Sigmoid colon (tissue), 7 donors: ENCODE measurements at regions of chr1 and their contacts with region 1.

Region 1: DNA sequence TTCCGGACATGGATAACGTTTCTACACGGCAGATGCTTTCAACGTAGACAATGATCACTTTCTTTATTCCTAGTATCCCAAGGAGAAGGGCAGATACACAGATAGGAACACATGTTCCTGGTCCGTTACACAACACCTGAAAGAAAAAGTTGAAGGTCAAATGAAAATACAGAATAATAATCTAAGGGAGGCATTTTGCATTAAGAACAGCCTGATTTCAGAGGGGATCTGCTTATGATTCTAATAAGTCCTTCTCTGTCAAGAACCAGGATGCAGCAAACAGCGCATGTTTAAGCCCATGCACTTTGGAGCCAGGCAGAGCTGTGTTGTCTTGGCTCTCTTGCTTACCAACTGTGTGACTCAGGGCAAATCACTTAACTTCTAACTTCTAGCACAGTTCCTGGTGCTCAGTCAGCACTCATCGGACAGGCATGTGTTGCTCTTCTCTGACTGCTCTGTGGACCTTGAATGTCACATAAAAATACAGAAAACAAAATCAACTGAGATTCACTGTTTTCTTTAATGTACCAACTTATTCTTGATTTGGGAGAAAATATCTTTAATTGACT is 56.3 kb upstream of the CNN3 start:
- DNase-seq: peak; percentile 66
- H3K4me3 ChIP-seq: no peak overlapping the region
- H3K27ac ChIP-seq: peak overlapping the region in 3 of 4 donors; percentile 14 to 58 (median 44)
- H3K4me1 ChIP-seq: peaks cover 0 to 16% (median 5%) of the 10 kb centered on the region in 4 donors
- H3K27me3 ChIP-seq: no peaks in the 10 kb centered on the region
- CTCF ChIP-seq: no peak
- EP300 ChIP-seq: no peak
- POLR2A ChIP-seq: no peak

Region 2: DNA sequence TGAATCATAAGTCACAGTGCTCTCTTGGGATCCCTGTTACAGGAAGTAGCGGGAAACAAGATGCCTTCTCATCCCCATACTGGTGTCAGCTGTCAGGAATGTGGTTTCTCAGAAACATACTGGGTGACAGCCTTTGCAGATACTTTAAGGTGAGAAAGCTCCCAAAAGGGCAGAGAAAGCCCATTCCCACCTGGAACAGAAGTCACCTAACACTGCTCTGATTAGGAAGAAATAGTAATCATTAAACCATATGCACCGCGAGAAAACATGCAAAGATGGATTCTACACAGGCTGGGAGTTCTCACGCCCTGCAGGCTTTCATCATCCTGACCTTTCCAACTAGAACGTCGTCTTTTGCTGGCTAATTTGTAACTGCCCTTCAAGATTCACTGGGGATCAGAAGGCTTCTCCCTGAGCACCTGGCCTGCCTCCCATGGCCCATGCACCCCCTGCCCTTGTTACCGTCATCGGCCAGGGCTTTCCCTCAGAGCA is 209.3 kb before region 1 on chr1:
- intact Hi-C with region 1: no loop called
- DNase-seq: no peak
- H3K4me3 ChIP-seq: no peak overlapping the region
- H3K27ac ChIP-seq: no peak overlapping the region
- H3K4me1 ChIP-seq: no peaks in the 10 kb centered on the region
- H3K27me3 ChIP-seq: no peaks in the 10 kb centered on the region
- CTCF ChIP-seq: no peak
- EP300 ChIP-seq: no peak
- POLR2A ChIP-seq: no peak

Region 3: GRCh38 chr1:95023399-95024043 is 40.3 kb after region 1 on chr1:
- intact Hi-C with region 1: loop called (anchors 5 kb)
- DNase-seq: no peak
- H3K4me3 ChIP-seq: no peak overlapping the region
- H3K27ac ChIP-seq: peak overlapping the region; percentile 68 to 75 (median 70)
- H3K4me1 ChIP-seq: peaks cover 0 to 33% (median 18%) of the 10 kb centered on the region in 4 donors
- H3K27me3 ChIP-seq: no peaks in the 10 kb centered on the region
- CTCF ChIP-seq: no peak
- EP300 ChIP-seq: no peak
- POLR2A ChIP-seq: no peak

Region 4: GRCh38 chr1:95146637-95147036 is 163.4 kb after region 1 on chr1:
- intact Hi-C with region 1: no loop called
- DNase-seq: no peak
- H3K4me3 ChIP-seq: no peak overlapping the region
- H3K27ac ChIP-seq: no peak overlapping the region
- H3K4me1 ChIP-seq: no peaks in the 10 kb centered on the region
- H3K27me3 ChIP-seq: no peaks in the 10 kb centered on the region
- CTCF ChIP-seq: no peak
- EP300 ChIP-seq: no peak
- POLR2A ChIP-seq: no peak